Activated CD4-positive, alpha-beta T cell treated with anti-CD3 and anti-CD28 coated beads, Interleukin-2, amount 10 ng/mL, durations not matched to agents 24 days and 14 days (primary cell): ENCODE measurements at regions of chr1 and their contacts with region 1.

Region 1: DNA sequence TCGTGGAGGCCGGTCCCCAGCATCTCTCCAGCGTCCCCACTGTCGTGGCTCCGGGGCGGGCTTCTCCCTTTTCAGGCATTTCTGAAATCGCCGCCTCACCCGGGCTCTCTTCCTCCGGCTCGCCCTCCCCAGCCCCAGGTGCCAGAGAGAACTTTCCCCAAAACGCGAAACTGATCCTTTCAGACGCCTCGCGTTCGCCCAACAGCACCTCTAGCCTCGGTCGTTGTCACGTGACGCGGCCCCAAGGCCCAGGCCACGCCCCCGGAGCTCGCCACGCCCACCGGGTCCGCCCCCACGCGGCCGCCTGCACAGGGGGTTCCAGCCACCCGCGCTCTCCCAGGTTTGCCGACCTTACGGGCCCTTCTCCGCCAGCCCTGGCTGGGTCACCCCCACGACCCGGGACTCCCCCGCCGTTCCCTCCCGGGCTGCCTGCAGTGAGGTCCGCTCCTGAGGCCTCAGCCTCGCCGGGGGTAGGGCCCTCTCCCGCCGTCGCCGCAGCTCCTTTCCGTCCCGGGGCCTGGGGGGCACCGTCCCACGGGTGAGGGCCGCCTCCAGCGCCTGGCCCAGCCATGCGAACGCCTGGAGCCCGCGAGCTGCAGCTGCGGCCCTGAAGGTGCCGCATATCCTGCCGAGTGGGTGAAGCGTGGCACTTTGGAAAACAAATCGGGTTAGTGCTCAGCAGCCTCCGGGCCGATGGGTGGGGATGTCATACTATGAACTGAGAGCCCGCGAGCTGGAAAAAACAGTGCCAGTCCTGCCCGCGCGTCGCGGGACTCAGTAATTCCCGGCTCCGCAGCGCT is 21.0 kb downstream of the H3-3A start:
- DNase-seq: peak; percentile 99
- H3K4me3 Mint-ChIP-seq: peak overlapping the region; percentile 97
- H3K27ac Mint-ChIP-seq: peak overlapping the region; percentile 90
- H3K4me1 Mint-ChIP-seq: peaks cover 8% of the 10 kb centered on the region
- H3K27me3 Mint-ChIP-seq: peaks cover 6% of the 10 kb centered on the region

Region 2: DNA sequence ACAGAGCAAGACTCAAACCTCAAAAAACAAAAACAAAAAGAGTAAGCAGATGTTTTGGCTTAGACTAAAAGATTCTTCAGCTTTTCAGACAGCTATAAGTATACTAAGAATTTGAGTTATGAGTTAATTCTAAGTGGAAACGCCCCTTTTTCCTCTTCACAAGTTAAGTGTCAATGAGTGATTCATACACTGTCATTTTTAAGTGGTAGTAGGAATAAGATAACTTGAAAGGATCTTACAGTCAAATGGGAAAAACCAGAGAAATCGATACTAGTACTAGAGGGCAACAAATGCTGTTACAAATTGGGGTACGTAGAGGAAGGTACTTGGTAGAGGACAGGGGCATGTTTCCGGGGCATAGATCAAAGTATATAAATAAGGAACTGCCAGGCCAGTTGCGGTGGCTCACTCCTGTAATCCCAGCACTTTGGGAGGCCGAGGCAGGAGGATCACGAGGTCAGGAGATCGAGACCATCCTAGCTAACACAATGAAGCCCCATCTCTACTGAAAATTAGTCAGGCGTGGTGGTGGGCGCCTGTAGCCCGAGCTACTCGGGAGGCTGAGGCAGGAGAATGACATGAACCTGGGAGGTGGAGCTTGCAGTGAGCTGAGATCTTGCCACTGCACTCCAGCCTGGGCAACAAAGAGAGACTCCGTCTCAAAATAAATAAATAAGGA is 13.6 kb before region 1 on chr1:
- intact Hi-C with region 1: loop called (anchors 1 kb)
- DNase-seq: no peak
- H3K4me3 Mint-ChIP-seq: peak overlapping the region; percentile 10
- H3K27ac Mint-ChIP-seq: peak overlapping the region; percentile 66
- H3K4me1 Mint-ChIP-seq: peaks cover 34% of the 10 kb centered on the region
- H3K27me3 Mint-ChIP-seq: no peaks in the 10 kb centered on the region

Region 3: GRCh38 chr1:226109829-226110248 is 26.3 kb after region 1 on chr1:
- intact Hi-C with region 1: loop called (anchors 1 kb)
- DNase-seq: peak; percentile 95
- H3K4me3 Mint-ChIP-seq: peak overlapping the region; percentile 89
- H3K27ac Mint-ChIP-seq: peak overlapping the region; percentile 80
- H3K4me1 Mint-ChIP-seq: peaks cover 24% of the 10 kb centered on the region
- H3K27me3 Mint-ChIP-seq: peaks cover 8% of the 10 kb centered on the region

Region 4: GRCh38 chr1:226679853-226680516 is 596.5 kb after region 1 on chr1:
- intact Hi-C with region 1: no loop called
- DNase-seq: peak; percentile 92
- H3K4me3 Mint-ChIP-seq: peak overlapping the region; percentile 82
- H3K27ac Mint-ChIP-seq: peak overlapping the region; percentile 96
- H3K4me1 Mint-ChIP-seq: peaks cover 86% of the 10 kb centered on the region
- H3K27me3 Mint-ChIP-seq: no peaks in the 10 kb centered on the region